Mammary epithelial cell (primary cell): ENCODE measurements at regions of chr6 and their contacts with region 1.

Region 1: GRCh38 chr6:46925563-46926253 is 4.0 kb upstream of the ADGRF5 start:
- DNase-seq: peak; percentile 71
- H3K4me3 ChIP-seq: no peak overlapping the region
- H3K27ac ChIP-seq: peak overlapping the region; percentile 6
- H3K4me1 ChIP-seq: peaks cover 21% of the 10 kb centered on the region
- H3K27me3 ChIP-seq: no peaks in the 10 kb centered on the region
- CTCF ChIP-seq: no peak

Region 2: GRCh38 chr6:46876126-46876525 is 49.6 kb before region 1 on chr6:
- CTCF ChIA-PET with region 1: no interaction called
- dilution Hi-C with region 1: no loop called
- in situ Hi-C with region 1: no loop called
- intact Hi-C with region 1: loop called (anchors 1 kb)
- DNase-seq: peak; percentile 97
- H3K4me3 ChIP-seq: no peak overlapping the region
- H3K27ac ChIP-seq: no peak overlapping the region
- H3K4me1 ChIP-seq: peaks cover 23% of the 10 kb centered on the region
- H3K27me3 ChIP-seq: no peaks in the 10 kb centered on the region
- CTCF ChIP-seq: no peak

Region 3: DNA sequence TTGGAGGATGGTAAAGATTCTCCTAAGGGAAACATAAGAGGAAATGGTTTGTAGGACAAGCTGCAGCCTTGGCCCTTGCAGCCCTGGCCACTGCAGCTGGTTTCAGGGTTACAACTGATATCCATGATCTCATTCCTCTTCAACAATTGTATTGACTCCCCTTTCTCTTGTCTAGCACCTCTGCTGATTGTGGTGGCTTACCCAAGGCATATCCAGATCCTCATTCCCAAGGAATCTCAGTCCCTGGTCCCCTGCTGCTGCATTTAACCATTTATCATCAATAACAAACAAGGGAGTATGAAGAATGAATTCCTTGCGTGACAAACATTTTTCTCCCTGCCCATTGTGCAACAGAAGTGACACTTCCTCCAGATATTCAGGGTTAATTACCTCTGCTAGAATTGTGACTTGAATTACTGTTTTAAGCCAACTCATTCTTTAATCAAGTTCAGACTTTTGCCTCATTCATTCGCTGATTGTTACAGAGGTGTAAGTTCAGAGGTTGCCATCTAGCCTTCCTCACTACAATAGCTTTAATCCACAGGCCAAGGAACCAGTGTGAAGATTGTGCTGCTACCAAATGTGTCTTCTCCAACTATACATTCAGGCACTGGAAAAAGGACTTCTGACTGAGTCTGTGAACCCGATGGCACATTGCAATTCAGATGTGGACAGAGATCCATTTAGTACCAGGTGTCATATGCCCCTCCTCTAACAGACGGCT is 227.5 kb after region 1 on chr6:
- CTCF ChIA-PET with region 1: no interaction called
- dilution Hi-C with region 1: no loop called
- in situ Hi-C with region 1: no loop called
- intact Hi-C with region 1: no loop called
- DNase-seq: no peak
- H3K4me3 ChIP-seq: no peak overlapping the region
- H3K27ac ChIP-seq: no peak overlapping the region
- H3K4me1 ChIP-seq: no peaks in the 10 kb centered on the region
- H3K27me3 ChIP-seq: no peaks in the 10 kb centered on the region
- CTCF ChIP-seq: no peak